Gastrocnemius medialis (tissue), 4 donors: ENCODE measurements at regions of chr7 and their contacts with region 1.

Region 1: DNA sequence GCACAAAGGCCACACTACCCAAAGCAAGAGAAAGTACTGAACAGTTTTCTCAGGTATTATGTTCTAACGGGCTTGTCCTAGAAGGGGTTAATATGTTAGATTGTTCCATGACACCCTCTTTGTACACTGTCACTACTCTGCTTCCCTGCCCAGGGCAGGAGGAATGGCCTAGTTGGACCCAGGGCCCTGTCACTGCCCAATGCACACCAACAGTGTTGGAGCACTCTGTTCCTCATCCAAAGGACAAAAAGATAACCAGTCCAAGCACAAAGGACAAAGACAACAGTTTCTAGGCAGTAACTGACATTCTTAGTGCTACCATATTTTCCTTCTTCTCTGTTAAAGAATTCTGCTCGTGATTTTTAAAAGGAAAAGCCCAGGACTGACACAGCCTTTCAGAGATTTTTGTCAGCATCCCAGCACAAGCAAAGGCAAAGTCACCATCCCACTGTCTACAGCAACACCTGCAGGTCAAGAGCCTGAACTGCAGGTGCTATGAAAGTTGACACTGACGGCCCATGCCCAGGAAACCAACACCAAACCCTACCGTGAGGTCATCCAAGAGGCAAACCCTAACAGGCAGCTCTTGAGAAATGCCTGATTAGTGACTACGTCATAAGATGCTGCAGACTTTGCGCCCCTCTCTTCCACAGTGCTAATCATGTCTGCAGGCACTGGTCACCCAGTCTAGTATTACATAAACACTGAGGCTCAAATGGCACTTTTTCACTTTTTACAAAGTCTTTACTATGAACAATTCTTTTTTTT is 13.2 kb downstream of the NUDCD3 start:
- DNase-seq: peak; percentile 47 to 77
- ATAC-seq: peak; percentile 85 to 99
- H3K4me3 ChIP-seq: no peak overlapping the region
- H3K27ac ChIP-seq: peak overlapping the region in 3 of 4 donors; percentile 6 to 47 (median 38)
- H3K4me1 ChIP-seq: peaks cover 27 to 35% of the 10 kb centered on the region in 2 donors
- H3K27me3 ChIP-seq: no peaks in the 10 kb centered on the region
- CTCF ChIP-seq: peak; percentile 89 to 95 (median 90)
- POLR2A ChIP-seq: no peak

Region 2: DNA sequence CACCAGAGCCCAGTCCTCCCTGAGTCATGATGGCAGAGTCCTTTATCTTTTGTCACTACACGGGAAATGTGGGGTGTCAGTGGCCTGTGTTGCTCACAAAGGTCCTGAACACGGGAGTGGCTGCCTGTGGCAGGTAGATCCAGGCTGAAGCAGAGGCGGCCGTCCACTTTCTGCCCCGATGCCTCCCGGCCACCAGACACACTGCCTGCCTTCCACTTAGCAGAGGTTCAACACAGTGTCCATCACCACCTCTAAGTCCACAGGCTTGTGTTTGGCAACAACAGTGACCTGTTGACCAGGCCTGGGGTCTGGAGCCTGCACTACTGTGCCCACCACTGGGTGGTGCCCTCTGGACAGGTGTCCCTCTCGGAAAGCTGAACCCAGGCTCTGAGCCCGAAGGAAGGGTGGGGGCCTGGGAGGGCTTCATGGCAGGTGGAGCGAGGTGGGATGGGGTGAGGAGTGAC is 102.0 kb before region 1 on chr7:
- in situ Hi-C with region 1: loop called in 3 of 4 experiments (anchors 5 to 10 kb)
- intact Hi-C with region 1: loop called (anchors 1 kb)
- DNase-seq: peak in 1 of 2 donors; percentile 64
- ATAC-seq: peak; percentile 67 to 73
- H3K4me3 ChIP-seq: no peak overlapping the region
- H3K27ac ChIP-seq: no peak overlapping the region
- H3K4me1 ChIP-seq: no peaks in the 10 kb centered on the region
- H3K27me3 ChIP-seq: no peaks in the 10 kb centered on the region
- CTCF ChIP-seq: peak; percentile 62 to 79 (median 70)
- POLR2A ChIP-seq: no peak

Region 3: DNA sequence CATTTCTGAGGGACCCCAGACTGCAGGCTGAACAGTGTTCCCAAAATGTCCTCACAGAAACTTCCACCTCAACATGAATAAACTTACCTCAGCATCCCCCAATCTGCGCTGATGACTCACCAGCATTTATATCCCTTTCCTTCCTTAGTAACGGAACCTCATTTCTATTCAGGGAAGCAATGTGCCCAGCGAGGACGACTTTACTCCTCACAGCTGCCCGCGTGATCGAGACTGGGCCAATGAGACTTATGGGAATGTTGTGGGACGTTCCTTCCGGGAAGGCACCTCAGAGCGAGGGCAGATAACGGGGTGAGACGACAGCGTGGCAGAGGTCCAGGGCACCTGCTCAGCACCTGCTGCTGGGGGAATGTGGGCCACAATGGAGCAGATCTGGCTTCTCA is 78.7 kb before region 1 on chr7:
- in situ Hi-C with region 1: no loop called
- intact Hi-C with region 1: loop called (anchors 5 kb)
- DNase-seq: peak; percentile 71 to 88
- ATAC-seq: peak; percentile 91 to 94
- H3K4me3 ChIP-seq: peak overlapping the region in 3 of 4 donors; percentile 11 to 45 (median 15)
- H3K27ac ChIP-seq: peak overlapping the region; percentile 82 to 91 (median 86)
- H3K4me1 ChIP-seq: peaks cover 44 to 48% of the 10 kb centered on the region in 2 donors
- H3K27me3 ChIP-seq: no peaks in the 10 kb centered on the region
- CTCF ChIP-seq: no peak
- POLR2A ChIP-seq: peak in 1 of 2 donors; percentile 17

Region 4: DNA sequence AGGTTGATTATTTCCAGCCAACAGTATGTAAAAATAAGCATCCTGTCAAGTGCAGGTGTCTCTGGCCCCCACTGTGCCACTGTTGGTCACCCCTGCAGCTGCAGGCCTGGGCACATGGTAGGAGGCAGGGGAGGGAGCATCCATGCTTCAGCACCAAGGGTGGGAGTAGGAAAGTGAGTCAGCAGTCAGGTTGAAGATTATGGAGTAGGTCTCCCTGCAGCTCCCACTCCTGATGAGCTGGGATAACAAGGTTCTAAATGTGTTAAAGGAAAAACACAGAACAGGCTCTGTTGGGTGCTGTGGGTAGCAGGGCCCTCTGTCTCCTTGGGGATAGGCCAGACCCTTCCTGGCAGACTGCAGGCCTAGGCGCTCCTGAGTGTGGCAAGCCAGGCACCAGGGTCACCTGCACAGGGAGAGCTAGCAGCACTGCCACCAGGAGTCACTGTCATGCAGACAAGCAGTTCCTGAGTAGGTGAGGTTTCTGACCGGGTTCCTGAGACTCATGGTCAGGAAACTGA is 46.1 kb before region 1 on chr7:
- in situ Hi-C with region 1: no loop called
- intact Hi-C with region 1: loop called (anchors 2 kb)
- DNase-seq: peak in 1 of 2 donors; percentile 66
- ATAC-seq: peak in 1 of 2 donors; percentile 69
- H3K4me3 ChIP-seq: no peak overlapping the region
- H3K27ac ChIP-seq: peak overlapping the region; percentile 38 to 78 (median 52)
- H3K4me1 ChIP-seq: peaks cover 47 to 54% of the 10 kb centered on the region in 2 donors
- H3K27me3 ChIP-seq: no peaks in the 10 kb centered on the region
- CTCF ChIP-seq: peak in 2 of 5 experiments; percentile 23 to 33
- POLR2A ChIP-seq: no peak